ENCODE measurements at regions of chr1 and their contacts with region 1.

Region 1: GRCh38 chr1:107782217-107782845 is 182.6 kb downstream of the VAV3 start:
- DNase-seq: no peak
- H3K4me3 Mint-ChIP-seq: no peak overlapping the region
- H3K27ac Mint-ChIP-seq: no peak overlapping the region
- H3K4me1 Mint-ChIP-seq: peaks cover 19% of the 10 kb centered on the region
- H3K27me3 Mint-ChIP-seq: no peaks in the 10 kb centered on the region

Region 2: GRCh38 chr1:107897438-107898345 is 115.4 kb after region 1 on chr1:
- intact Hi-C with region 1: loop called (anchors 10 kb)
- DNase-seq: no peak
- H3K4me3 Mint-ChIP-seq: no peak overlapping the region
- H3K27ac Mint-ChIP-seq: no peak overlapping the region
- H3K4me1 Mint-ChIP-seq: peaks cover 21% of the 10 kb centered on the region
- H3K27me3 Mint-ChIP-seq: no peaks in the 10 kb centered on the region

Region 3: GRCh38 chr1:107963601-107964335 is 181.4 kb after region 1 on chr1:
- intact Hi-C with region 1: loop called (anchors 5 kb)
- DNase-seq: peak; percentile 32
- H3K4me3 Mint-ChIP-seq: peak overlapping the region; percentile 83
- H3K27ac Mint-ChIP-seq: peak overlapping the region; percentile 85
- H3K4me1 Mint-ChIP-seq: peaks cover 25% of the 10 kb centered on the region
- H3K27me3 Mint-ChIP-seq: peaks cover 3% of the 10 kb centered on the region

Region 4: GRCh38 chr1:108125312-108126138 is 343.2 kb after region 1 on chr1:
- intact Hi-C with region 1: loop called (anchors 1 kb)
- DNase-seq: peak; percentile 43
- H3K4me3 Mint-ChIP-seq: no peak overlapping the region
- H3K27ac Mint-ChIP-seq: no peak overlapping the region
- H3K4me1 Mint-ChIP-seq: no peaks in the 10 kb centered on the region
- H3K27me3 Mint-ChIP-seq: peaks cover 6% of the 10 kb centered on the region

Region 5: DNA sequence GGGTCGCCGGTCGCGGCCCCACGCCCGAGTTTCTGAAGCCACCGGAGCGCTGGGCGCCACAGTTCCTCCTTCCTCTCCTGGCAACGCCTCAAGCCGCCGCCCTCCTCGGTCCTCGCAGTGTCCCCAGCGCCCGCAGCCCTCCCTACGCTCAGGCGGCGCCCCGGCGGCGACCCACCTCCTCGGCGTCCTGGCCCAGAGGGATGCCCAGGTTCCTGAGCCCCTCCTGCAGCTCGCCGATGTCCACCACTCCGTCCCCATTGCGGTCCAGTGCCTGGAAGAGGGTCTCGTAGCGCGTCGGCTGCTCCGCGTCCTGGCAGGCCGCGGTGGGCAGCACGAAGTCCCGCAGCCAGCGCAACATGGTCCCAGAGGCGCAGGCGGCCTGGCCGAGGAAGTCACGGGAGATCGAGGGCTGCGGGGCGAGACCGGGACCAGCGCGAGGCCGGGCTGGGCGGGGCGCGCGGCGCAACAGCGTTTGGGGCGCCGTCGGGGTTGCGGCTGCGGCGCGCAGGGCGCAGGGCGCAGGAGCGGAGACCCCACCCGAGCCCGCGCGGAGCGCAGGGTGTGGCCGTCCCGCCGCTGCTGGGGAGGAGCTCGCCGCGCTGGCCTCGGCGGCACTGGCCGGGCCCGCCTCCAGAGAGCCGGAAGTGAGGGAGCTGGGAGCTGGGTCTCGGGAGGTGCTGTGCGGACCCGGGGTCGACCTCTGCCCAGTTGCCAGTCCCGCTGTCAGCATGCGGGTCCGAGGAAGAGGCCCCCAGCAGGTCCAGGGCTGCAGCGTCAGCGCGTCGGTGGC is 417.6 kb after region 1 on chr1 and contains the start of gene SLC25A24:
- intact Hi-C with region 1: loop called (anchors 5 kb)
- DNase-seq: peak; percentile 84
- H3K4me3 Mint-ChIP-seq: peak within 1 kb of the TSS; percentile 89
- H3K27ac Mint-ChIP-seq: peak within 1 kb of the TSS; percentile 75
- H3K4me1 Mint-ChIP-seq: peaks cover 37% of the 10 kb centered on the region
- H3K27me3 Mint-ChIP-seq: peaks cover 5% of the 10 kb centered on the region
- total RNA-seq, gene SLC25A24: 27.5 and 28.0 TPM in 2 replicates